ENCODE measurements at regions of chr2 and their contacts with region 1.

Region 1: GRCh38 chr2:133859578-133859977 is 291.3 kb upstream of the NCKAP5 start:
- DNase-seq: no peak
- ATAC-seq: no peak
- H3K4me3 ChIP-seq: no peak overlapping the region
- H3K27ac ChIP-seq: no peak overlapping the region
- H3K4me1 ChIP-seq: no peaks in the 10 kb centered on the region
- H3K27me3 ChIP-seq: peaks cover 0 to 2% of the 10 kb centered on the region in 2 experiments; a peak in 2 of 4 replicates
- CTCF ChIP-seq: no peak
- EP300 ChIP-seq: no peak
- POLR2A ChIP-seq: no peak
- RAD21 ChIP-seq: no peak

Region 2: DNA sequence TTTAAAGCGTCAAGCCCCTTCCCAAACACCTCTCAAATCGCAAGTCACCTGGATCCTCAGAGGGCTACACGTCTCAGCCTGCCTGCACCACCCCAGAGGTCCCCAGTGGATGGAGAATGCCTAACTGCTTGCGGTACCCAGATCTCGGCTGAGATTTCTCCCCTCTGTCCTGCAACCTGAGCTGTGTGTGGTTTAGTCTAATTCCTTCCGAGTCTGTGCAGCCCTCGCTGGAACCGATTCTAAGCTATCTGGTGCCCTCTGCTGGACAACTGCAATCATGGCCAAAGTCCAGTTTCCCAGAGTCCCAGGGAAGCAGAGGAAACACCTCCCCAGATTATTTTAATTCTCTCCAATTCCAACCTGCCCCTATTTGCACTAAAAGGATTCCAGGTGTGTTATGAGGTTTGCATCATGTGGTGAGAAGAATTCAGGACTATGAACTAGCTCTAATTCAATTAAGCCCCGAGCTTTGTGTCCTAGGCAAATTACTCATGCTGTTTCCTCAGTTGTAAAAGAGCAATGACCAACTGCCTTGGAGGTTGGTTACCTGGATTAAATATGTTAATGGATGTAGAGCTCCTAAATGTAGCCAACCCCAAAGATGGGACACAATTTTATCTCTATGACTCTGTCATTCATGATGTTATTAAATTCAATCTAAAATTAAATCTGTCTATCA is 15.2 kb before region 1 on chr2:
- CTCF ChIA-PET with region 1: interaction called, 16 read pairs
- POLR2A ChIA-PET with region 1: no interaction called
- RAD21 ChIA-PET with region 1: no interaction called
- SMC1A ChIA-PET with region 1: no interaction called
- in situ Hi-C with region 1: no loop called
- intact Hi-C with region 1: no loop called
- DNase-seq: peak; percentile 5
- ATAC-seq: peak; percentile 94
- H3K4me3 ChIP-seq: no peak overlapping the region
- H3K27ac ChIP-seq: no peak overlapping the region
- H3K4me1 ChIP-seq: no peaks in the 10 kb centered on the region
- H3K27me3 ChIP-seq: no peaks in the 10 kb centered on the region; a peak in 1 of 4 replicates
- CTCF ChIP-seq: peak; percentile 84 to 91 (median 84)
- EP300 ChIP-seq: no peak
- POLR2A ChIP-seq: no peak
- RAD21 ChIP-seq: peak; percentile 87